Naive thymus-derived CD4-positive, alpha-beta T cell (primary cell): ENCODE measurements at regions of chr19 and their contacts with region 1.

Region 1: DNA sequence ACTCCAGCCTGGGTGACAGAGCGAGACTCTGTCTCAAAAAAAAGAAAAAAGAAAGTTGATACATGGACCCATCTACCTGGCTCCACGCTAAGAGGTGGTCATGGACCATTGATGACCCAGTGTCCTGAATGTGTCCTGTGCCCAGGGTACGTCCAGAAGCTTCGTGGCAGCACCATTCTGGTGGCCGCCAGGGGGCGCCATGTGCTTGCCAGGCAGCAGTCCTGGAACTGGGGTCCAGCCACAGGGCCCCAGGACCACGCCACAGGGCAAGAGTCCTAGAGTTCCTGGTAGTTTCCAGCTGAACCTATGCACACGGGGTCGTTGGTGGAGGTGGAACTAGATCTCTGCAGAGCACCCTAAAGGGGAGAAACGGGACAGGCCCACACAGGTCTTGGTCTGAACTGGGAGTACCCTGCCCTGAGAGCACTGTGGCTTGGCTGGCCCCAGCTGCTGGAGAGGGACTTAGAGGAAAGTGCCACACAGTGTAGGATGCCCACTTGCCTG is 19.9 kb upstream of the FBXO27 start:
- DNase-seq: peak; percentile 38 to 73 (median 57)
- ATAC-seq: peak; percentile 63
- H3K4me3 ChIP-seq: no peak overlapping the region
- H3K4me3 Mint-ChIP-seq: no peak overlapping the region
- H3K27ac ChIP-seq: no peak overlapping the region
- H3K27ac Mint-ChIP-seq: no peak overlapping the region
- H3K4me1 ChIP-seq: no peaks in the 10 kb centered on the region
- H3K4me1 Mint-ChIP-seq: no peaks in the 10 kb centered on the region
- H3K27me3 ChIP-seq: no peaks in the 10 kb centered on the region
- H3K27me3 Mint-ChIP-seq: peaks cover 0 to 3% (median 0%) of the 10 kb centered on the region in 5 donors

Region 2: DNA sequence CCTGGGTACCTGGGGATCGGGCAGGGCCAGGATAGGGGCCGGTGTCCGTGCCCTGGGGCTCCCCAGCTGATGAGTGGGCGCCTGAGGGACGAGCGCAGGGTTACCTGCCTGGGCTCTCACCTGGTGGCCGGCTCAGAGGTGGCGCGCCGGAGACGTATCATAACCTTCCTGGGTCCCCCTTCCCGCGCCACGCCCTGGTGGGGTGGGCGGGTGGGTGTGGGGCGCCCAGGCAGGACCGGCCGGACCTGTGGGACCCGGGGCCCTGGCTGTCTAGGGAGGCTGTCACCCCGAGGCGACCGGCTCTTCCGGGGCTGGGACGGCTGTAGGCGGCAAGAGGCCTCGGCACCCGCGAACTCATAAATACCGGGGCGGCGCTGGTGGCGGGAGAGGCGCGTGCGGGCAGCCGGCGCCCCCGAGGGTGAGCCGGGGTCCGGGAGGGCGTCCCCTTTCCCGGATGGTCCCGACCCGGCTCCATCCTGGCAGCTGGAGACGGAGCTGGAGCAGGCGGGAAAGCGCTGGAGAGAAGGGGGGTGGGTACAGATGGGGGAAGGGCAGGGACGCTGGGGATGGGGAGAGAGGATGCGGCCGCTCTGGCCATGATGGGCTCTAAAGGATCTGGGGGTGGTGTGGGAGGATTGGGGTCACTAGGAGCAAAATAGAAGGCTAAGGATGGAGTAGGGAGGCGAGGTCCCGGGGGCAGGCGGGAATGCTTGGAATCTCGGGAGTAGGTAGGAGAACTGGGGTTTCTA is 31.9 kb after region 1 on chr19 and contains the start of gene ACP7:
- CTCF ChIA-PET with region 1: interaction called, 3 read pairs
- POLR2A ChIA-PET with region 1: no interaction called
- intact Hi-C with region 1: loop called in 1 of 2 experiments (anchors 5 kb)
- DNase-seq: no peak
- ATAC-seq: peak; percentile 52
- H3K4me3 ChIP-seq: peak within 1 kb of the TSS; percentile 40
- H3K4me3 Mint-ChIP-seq: peak within 1 kb of the TSS; percentile 25 to 86 (median 76)
- H3K27ac ChIP-seq: no peak within 1 kb of the TSS
- H3K27ac Mint-ChIP-seq: peak within 1 kb of the TSS in 3 of 9 donors; percentile 32 to 53 (median 45)
- H3K4me1 ChIP-seq: peaks cover 8 to 11% of the 10 kb centered on the region in 2 donors
- H3K4me1 Mint-ChIP-seq: peaks cover 6 to 20% (median 16%) of the 10 kb centered on the region in 7 donors
- H3K27me3 ChIP-seq: peaks cover 12 to 13% of the 10 kb centered on the region in 2 donors
- H3K27me3 Mint-ChIP-seq: peaks cover 28 to 58% (median 43%) of the 10 kb centered on the region in 5 donors
- total RNA-seq, gene ACP7: not detected

Region 3: GRCh38 chr19:39110263-39110967 is 58.1 kb after region 1 on chr19:
- CTCF ChIA-PET with region 1: interaction called, 5 read pairs
- POLR2A ChIA-PET with region 1: interaction called, 7 read pairs
- intact Hi-C with region 1: loop called in 1 of 2 experiments (anchors 1 kb)
- DNase-seq: peak; percentile 33 to 73 (median 57)
- ATAC-seq: peak; percentile 88
- H3K4me3 ChIP-seq: no peak overlapping the region
- H3K4me3 Mint-ChIP-seq: no peak overlapping the region
- H3K27ac ChIP-seq: no peak overlapping the region
- H3K27ac Mint-ChIP-seq: peak overlapping the region in 1 of 9 donors; percentile 72
- H3K4me1 ChIP-seq: no peaks in the 10 kb centered on the region
- H3K4me1 Mint-ChIP-seq: peaks cover 0 to 7% (median 5%) of the 10 kb centered on the region in 7 donors
- H3K27me3 ChIP-seq: no peaks in the 10 kb centered on the region
- H3K27me3 Mint-ChIP-seq: peaks cover 0 to 16% (median 0%) of the 10 kb centered on the region in 5 donors

Region 4: GRCh38 chr19:39246951-39247669 is 194.8 kb after region 1 on chr19:
- CTCF ChIA-PET with region 1: no interaction called
- POLR2A ChIA-PET with region 1: no interaction called
- intact Hi-C with region 1: no loop called
- DNase-seq: peak in 6 of 9 donors; percentile 12 to 36 (median 24)
- ATAC-seq: peak; percentile 69
- H3K4me3 ChIP-seq: no peak overlapping the region
- H3K4me3 Mint-ChIP-seq: peak overlapping the region in 6 of 10 donors; percentile 41 to 64 (median 48)
- H3K27ac ChIP-seq: no peak overlapping the region
- H3K27ac Mint-ChIP-seq: no peak overlapping the region
- H3K4me1 ChIP-seq: no peaks in the 10 kb centered on the region
- H3K4me1 Mint-ChIP-seq: peaks cover 2 to 9% (median 7%) of the 10 kb centered on the region in 7 donors
- H3K27me3 ChIP-seq: no peaks in the 10 kb centered on the region
- H3K27me3 Mint-ChIP-seq: peaks cover 4 to 30% (median 6%) of the 10 kb centered on the region in 5 donors

Region 5: GRCh38 chr19:39277612-39278011 is 225.3 kb after region 1 on chr19:
- CTCF ChIA-PET with region 1: no interaction called
- POLR2A ChIA-PET with region 1: no interaction called
- intact Hi-C with region 1: no loop called
- DNase-seq: no peak
- ATAC-seq: no peak
- H3K4me3 ChIP-seq: no peak overlapping the region
- H3K4me3 Mint-ChIP-seq: no peak overlapping the region
- H3K27ac ChIP-seq: no peak overlapping the region
- H3K27ac Mint-ChIP-seq: no peak overlapping the region
- H3K4me1 ChIP-seq: no peaks in the 10 kb centered on the region
- H3K4me1 Mint-ChIP-seq: peaks cover 0 to 2% (median 0%) of the 10 kb centered on the region in 7 donors
- H3K27me3 ChIP-seq: no peaks in the 10 kb centered on the region
- H3K27me3 Mint-ChIP-seq: peaks cover 0 to 14% (median 0%) of the 10 kb centered on the region in 5 donors

Region 6: GRCh38 chr19:39319892-39320248 is 267.6 kb after region 1 on chr19:
- CTCF ChIA-PET with region 1: no interaction called
- POLR2A ChIA-PET with region 1: no interaction called
- intact Hi-C with region 1: loop called in 1 of 2 experiments (anchors 5 kb)
- DNase-seq: no peak
- ATAC-seq: no peak
- H3K4me3 ChIP-seq: peak overlapping the region; percentile 62
- H3K4me3 Mint-ChIP-seq: peak overlapping the region; percentile 67 to 89 (median 80)
- H3K27ac ChIP-seq: peak overlapping the region; percentile 70
- H3K27ac Mint-ChIP-seq: peak overlapping the region in 8 of 9 donors; percentile 48 to 91 (median 66)
- H3K4me1 ChIP-seq: peaks cover 9 to 10% of the 10 kb centered on the region in 2 donors
- H3K4me1 Mint-ChIP-seq: peaks cover 20 to 48% (median 30%) of the 10 kb centered on the region in 7 donors
- H3K27me3 ChIP-seq: no peaks in the 10 kb centered on the region
- H3K27me3 Mint-ChIP-seq: peaks cover 0 to 8% (median 0%) of the 10 kb centered on the region in 5 donors

Region 7: DNA sequence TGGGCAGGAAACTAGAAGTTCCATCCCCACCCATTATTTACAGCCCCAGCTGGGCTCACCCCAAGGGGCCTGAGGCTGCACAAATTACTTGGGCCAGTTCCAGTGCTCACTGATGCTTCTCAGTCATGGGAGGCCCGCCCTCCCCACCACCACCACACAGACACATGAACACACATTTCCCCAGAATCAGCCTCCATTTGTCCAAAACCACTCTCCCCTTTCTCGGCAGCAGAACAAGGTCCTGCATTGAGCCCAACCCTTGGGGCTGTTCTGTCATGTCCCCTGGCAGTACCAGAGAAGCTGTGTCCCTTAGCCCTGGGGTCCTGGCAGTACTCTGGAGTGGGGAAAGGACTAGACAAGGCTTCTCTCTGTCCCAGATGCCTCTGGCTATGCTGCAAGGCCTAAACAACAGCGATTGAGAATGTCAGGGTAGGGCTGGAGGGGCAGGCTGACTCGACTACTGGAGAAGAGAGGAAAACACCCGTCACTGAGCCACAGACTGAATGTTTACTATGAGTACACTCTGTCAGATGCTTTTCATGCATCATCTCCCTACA is 311.7 kb after region 1 on chr19:
- CTCF ChIA-PET with region 1: no interaction called
- POLR2A ChIA-PET with region 1: no interaction called
- intact Hi-C with region 1: no loop called
- DNase-seq: no peak
- ATAC-seq: peak; percentile 8
- H3K4me3 ChIP-seq: no peak overlapping the region
- H3K4me3 Mint-ChIP-seq: no peak overlapping the region
- H3K27ac ChIP-seq: no peak overlapping the region
- H3K27ac Mint-ChIP-seq: no peak overlapping the region
- H3K4me1 ChIP-seq: no peaks in the 10 kb centered on the region
- H3K4me1 Mint-ChIP-seq: peaks cover 0 to 10% (median 0%) of the 10 kb centered on the region in 7 donors
- H3K27me3 ChIP-seq: no peaks in the 10 kb centered on the region
- H3K27me3 Mint-ChIP-seq: no peaks in the 10 kb centered on the region